ENCODE measurements at regions of chr6 and their contacts with region 1.

Region 1: DNA sequence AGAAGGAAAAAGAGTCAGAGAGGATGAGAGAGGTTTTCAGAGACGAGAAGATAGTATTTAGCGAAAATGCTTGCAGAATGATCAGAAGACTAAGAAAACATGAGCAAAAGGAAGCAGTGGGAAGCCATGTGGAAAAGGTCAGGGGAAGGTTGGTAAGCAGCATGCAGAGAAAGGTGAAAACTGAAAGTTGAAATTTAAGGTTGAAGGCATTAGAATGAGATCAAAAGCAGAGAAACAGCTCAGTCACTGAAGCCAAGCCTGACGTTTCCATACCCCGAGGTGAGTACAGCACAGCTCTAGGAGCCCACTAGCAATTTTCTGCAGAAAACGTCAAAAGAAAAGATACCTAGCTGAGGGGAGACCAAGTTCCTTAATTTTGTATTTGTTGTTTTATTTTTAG is 19.1 kb upstream of the TFB1M start:
- DNase-seq: no peak
- H3K4me3 ChIP-seq: no peak overlapping the region
- H3K27ac ChIP-seq: no peak overlapping the region
- H3K4me1 ChIP-seq: no peaks in the 10 kb centered on the region
- H3K27me3 ChIP-seq: no peaks in the 10 kb centered on the region
- CTCF ChIP-seq: no peak
- POLR2A ChIP-seq: no peak

Region 2: GRCh38 chr6:155495011-155495768 is 161.8 kb after region 1 on chr6:
- intact Hi-C with region 1: loop called (anchors 5 kb)
- DNase-seq: no peak
- H3K4me3 ChIP-seq: no peak overlapping the region
- H3K27ac ChIP-seq: peak overlapping the region in 1 of 2 donors; percentile 6
- H3K4me1 ChIP-seq: no peaks in the 10 kb centered on the region
- H3K27me3 ChIP-seq: no peaks in the 10 kb centered on the region
- CTCF ChIP-seq: peak in 1 of 4 experiments; percentile 5
- POLR2A ChIP-seq: no peak

Measured in prostate gland (tissue), 2 donors.